Gastrocnemius medialis (tissue), 4 donors: ENCODE measurements at regions of chr5 and their contacts with region 1.

Region 1: GRCh38 chr5:58902765-58903164 is 319.9 kb downstream of the RAB3C start:
- DNase-seq: no peak
- ATAC-seq: no peak
- H3K4me3 ChIP-seq: no peak overlapping the region
- H3K27ac ChIP-seq: no peak overlapping the region
- H3K4me1 ChIP-seq: peaks cover 0 to 11% of the 10 kb centered on the region in 2 donors
- H3K27me3 ChIP-seq: no peaks in the 10 kb centered on the region
- CTCF ChIP-seq: peak in 3 of 5 experiments; percentile 6 to 27 (median 7)
- POLR2A ChIP-seq: no peak

Region 2: DNA sequence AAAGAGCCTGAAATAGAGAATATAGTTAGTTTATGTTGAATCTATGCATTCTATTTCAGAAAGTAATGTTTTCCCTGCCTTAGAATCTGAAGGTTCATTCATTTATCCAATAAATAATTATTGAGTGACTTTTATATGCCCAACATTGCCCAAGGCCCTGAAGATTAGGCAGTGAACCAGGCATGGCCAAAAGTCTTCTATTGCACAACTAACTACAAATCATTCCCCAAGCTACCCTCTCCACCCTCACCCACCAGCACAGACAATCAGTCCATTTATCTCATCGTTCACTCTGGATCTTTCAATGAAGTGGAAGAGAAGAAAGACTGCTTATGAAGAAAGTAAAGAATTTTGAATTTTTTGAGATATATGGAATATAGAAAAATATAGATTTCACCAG is 711.3 kb before region 1 on chr5:
- in situ Hi-C with region 1: no loop called
- intact Hi-C with region 1: no loop called
- DNase-seq: no peak
- ATAC-seq: no peak
- H3K4me3 ChIP-seq: no peak overlapping the region
- H3K27ac ChIP-seq: no peak overlapping the region
- H3K4me1 ChIP-seq: peaks cover 6 to 16% of the 10 kb centered on the region in 2 donors
- H3K27me3 ChIP-seq: no peaks in the 10 kb centered on the region
- CTCF ChIP-seq: no peak
- POLR2A ChIP-seq: no peak

Region 3: GRCh38 chr5:58871648-58872242 is 31.0 kb before region 1 on chr5:
- in situ Hi-C with region 1: no loop called
- intact Hi-C with region 1: no loop called
- DNase-seq: no peak
- ATAC-seq: no peak
- H3K4me3 ChIP-seq: no peak overlapping the region
- H3K27ac ChIP-seq: no peak overlapping the region
- H3K4me1 ChIP-seq: no peaks in the 10 kb centered on the region
- H3K27me3 ChIP-seq: no peaks in the 10 kb centered on the region
- CTCF ChIP-seq: peak; percentile 26 to 61 (median 44)
- POLR2A ChIP-seq: no peak

Region 4: DNA sequence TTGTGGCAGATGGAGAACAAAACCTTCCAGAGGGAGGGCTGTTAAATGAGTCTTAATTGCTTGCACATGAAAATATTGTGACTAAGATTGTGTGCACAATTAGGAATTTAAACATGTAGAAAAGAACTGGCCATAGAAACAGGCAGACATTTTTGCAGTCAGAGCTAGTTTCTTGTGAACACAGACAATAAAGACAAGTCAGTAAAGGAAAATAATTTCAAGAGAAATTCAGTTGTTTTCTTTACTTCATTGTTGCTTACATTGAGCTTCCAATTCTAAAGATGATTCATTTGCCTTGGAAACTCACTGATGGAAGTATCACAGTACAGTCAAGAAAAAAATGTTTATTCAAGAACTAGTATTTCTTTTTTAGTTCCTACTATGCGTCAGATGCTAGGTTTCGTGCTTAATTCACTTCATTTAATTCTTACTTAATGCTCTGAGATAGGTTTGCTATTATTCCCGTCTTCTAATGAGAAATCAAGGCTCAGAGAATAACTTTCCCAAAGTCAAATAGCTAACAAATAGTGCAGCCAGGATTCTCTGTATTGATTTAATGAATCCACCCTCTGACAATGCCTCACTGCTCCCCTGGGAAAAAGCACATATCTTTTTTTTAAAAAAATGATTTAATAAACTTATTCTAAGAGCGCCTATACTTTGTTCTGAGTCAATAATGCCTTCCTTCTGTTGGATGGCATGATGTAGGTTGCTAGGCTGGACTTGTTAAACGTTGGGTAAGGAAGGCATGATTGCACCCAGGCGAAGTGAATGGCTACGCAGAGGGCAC is 261.5 kb after region 1 on chr5:
- in situ Hi-C with region 1: loop called in 1 of 4 experiments (anchors 10 kb)
- intact Hi-C with region 1: loop called (anchors 5 kb)
- DNase-seq: no peak
- ATAC-seq: no peak
- H3K4me3 ChIP-seq: no peak overlapping the region
- H3K27ac ChIP-seq: peak overlapping the region in 1 of 4 donors; percentile 21
- H3K4me1 ChIP-seq: peaks cover 17 to 21% of the 10 kb centered on the region in 2 donors
- H3K27me3 ChIP-seq: no peaks in the 10 kb centered on the region
- CTCF ChIP-seq: no peak
- POLR2A ChIP-seq: no peak